BJ (cell line): ENCODE measurements at regions of chr12 and their contacts with region 1.

Region 1: GRCh38 chr12:10140001-10140400 is 10.0 kb upstream of the CLEC7A start:
- DNase-seq: no peak
- H3K4me3 ChIP-seq: no peak overlapping the region
- H3K27me3 ChIP-seq: no peaks in the 10 kb centered on the region
- CTCF ChIP-seq: peak; percentile 58

Region 2: DNA sequence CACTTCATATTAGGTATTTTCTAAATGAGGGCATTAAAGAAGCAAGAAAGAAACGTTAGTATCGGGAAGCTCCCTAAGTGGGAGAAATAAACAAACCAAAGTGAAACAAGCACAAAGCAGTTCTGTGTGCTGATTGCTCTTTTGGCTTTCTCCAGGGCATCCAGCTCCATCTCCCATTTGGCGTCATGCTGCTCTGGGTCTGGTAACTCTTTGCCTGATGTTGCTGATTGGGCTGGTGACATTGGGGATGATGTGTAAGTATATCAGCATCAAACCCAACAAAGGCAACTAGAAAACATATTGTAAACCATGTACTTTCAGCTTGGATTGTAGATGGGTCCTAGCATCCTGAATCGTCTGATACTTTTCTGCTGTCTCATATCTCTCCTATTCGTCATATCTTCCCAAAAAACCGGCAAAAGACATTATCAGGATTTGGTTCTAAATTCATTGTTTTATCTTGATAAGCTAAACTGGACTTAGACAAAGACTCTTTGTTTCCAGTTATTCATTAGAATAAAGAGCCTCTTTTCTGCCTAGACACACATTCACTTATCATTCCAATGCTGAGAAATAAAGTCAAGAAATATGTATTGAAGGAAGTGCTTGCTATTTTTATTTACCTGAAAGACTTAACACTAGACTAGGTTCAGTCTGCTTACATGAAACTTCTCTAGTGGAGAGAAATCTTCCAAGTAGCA is 127.2 kb before region 1 on chr12:
- CTCF ChIA-PET with region 1: interaction called, 44 read pairs
- POLR2A ChIA-PET with region 1: no interaction called
- DNase-seq: no peak
- H3K4me3 ChIP-seq: no peak overlapping the region
- H3K27me3 ChIP-seq: no peaks in the 10 kb centered on the region
- CTCF ChIP-seq: no peak

Region 3: DNA sequence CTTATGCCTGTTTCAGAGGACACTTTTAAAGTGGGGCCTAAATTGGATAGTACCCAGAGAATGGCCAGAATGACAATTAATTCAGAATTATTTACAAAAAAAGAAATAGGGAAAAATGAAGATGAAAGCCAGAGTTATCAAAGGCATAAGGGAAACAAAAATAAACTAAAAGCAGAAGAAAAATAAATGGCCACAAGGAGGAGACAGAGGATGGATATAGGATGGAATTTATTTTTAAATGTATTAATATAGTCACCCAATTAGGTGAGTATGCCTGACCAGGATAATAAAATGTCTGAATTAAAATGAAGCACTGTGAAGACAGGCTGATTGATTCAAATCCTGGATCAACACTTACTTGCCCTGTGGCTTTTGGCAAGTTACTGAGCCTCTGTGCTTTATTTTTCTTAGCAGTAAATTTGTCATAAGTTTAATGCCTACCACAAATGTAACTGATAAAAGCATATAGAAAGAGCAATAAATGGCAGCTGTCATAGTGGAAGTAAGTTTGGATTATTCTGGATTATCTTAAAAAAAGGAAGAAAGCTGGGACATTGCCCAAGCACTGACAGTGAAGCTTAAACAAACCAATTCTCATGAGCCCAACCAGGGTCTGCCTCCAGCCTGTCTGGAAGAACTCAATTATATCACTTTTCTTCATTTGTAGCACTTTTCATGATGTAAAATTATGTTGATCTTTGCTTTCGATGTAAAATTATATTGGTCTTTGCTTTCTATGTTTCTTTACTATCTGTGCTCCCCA is 106.0 kb before region 1 on chr12:
- CTCF ChIA-PET with region 1: interaction called, 73 read pairs
- POLR2A ChIA-PET with region 1: no interaction called
- DNase-seq: no peak
- H3K4me3 ChIP-seq: no peak overlapping the region
- H3K27me3 ChIP-seq: no peaks in the 10 kb centered on the region
- CTCF ChIP-seq: peak; percentile 50

Region 4: DNA sequence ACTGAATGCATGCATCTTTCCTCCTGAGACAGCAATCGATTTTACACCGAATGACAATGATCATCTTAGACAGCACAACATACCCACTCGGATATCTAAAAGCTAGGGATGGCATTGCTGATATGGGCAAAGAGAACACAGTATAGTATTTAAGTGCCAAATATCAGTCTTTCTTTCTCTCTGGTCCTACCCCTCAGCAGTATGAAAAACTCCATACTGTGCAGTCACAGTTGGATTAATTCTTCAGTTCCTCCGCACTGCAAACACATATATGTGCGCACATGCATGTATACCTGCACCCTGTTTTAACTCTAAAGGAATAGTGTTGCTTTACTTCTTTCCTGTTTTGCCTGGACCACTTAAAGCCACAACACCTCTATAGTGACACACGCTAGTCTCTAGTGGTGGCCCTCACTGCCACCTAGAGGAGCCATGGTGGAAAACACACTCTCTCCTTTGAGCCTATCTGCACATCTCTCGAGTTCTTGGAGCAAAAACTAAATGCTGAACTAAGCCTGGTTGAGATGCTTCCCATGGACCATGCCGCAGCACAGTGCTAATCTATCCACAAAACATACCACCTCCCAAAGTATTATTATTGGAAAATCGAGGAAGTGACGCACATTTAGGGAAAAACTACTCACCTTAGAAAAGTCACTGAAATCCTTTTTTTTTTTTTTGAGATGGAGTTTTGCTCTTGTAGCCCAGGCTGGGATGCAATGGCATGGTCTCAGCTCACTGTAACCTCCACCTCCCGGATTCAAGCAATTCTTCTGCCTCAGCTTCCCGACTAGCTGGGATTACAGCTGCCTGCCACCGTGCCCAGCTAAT is 50.8 kb after region 1 on chr12:
- CTCF ChIA-PET with region 1: interaction called, 15 read pairs
- POLR2A ChIA-PET with region 1: no interaction called
- DNase-seq: no peak
- H3K4me3 ChIP-seq: no peak overlapping the region
- H3K27me3 ChIP-seq: no peaks in the 10 kb centered on the region
- CTCF ChIP-seq: peak; percentile 86